CD8-positive, alpha-beta T cell (primary cell): ENCODE measurements at regions of chr12 and their contacts with region 1.

Region 1: DNA sequence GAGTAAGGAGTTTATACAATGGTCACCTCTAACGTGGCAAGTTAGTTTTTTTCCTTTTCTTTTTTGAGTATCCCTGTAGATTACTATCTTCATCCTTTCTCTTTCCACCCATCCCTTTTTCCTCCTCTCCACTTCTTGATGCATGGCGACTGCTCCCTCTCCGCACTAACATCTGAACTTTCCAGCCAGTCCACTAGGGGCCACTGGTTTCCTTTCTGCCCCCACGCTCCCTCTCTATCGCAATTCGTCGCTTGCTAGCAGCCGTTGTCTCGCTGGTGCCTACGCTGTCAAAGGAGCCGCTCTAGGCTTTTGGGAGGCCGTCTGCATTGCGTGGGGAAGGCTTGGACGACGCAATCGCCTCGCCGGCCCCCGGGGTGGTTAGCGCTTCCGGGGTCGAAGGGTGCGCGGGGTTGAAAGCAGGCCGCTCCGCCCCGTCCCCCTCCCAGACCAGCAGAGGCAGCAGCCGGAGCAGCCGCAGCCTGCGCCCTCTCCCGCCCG is at the start of gene PCBP2:
- DNase-seq: peak; percentile 94 to 99 (median 98)
- ATAC-seq: peak; percentile 93
- H3K4me3 ChIP-seq: peak within 1 kb of the TSS; percentile 81 to 88
- H3K4me3 Mint-ChIP-seq: peak within 1 kb of the TSS; percentile 99
- H3K27ac ChIP-seq: peak within 1 kb of the TSS; percentile 80 to 95
- H3K27ac Mint-ChIP-seq: peak within 1 kb of the TSS; percentile 99
- H3K4me1 ChIP-seq: peaks cover 27% of the 10 kb centered on the region
- H3K4me1 Mint-ChIP-seq: peaks cover 43% of the 10 kb centered on the region
- H3K27me3 ChIP-seq: no peaks in the 10 kb centered on the region
- H3K27me3 Mint-ChIP-seq: no peaks in the 10 kb centered on the region
- CTCF ChIP-seq: peak; percentile 94
- total RNA-seq, gene PCBP2: 1,250 to 1,255 TPM

Region 2: GRCh38 chr12:53352331-53353256 is 99.1 kb before region 1 on chr12:
- CTCF ChIA-PET with region 1: interaction called, 11 read pairs
- POLR2A ChIA-PET with region 1: no interaction called
- intact Hi-C with region 1: no loop called
- DNase-seq: peak; percentile 67 to 92 (median 82)
- ATAC-seq: peak; percentile 100
- H3K4me3 ChIP-seq: no peak overlapping the region
- H3K4me3 Mint-ChIP-seq: no peak overlapping the region
- H3K27ac ChIP-seq: no peak overlapping the region
- H3K27ac Mint-ChIP-seq: peak overlapping the region; percentile 8
- H3K4me1 ChIP-seq: no peaks in the 10 kb centered on the region
- H3K4me1 Mint-ChIP-seq: peaks cover 6% of the 10 kb centered on the region
- H3K27me3 ChIP-seq: no peaks in the 10 kb centered on the region
- H3K27me3 Mint-ChIP-seq: no peaks in the 10 kb centered on the region
- CTCF ChIP-seq: peak; percentile 75

Region 3: GRCh38 chr12:53467880-53468279 is 16.2 kb after region 1 on chr12:
- CTCF ChIA-PET with region 1: no interaction called
- POLR2A ChIA-PET with region 1: interaction called, 3 read pairs
- intact Hi-C with region 1: loop called in 1 of 2 experiments (anchors 2 kb)
- DNase-seq: no peak
- ATAC-seq: no peak
- H3K4me3 ChIP-seq: no peak overlapping the region
- H3K4me3 Mint-ChIP-seq: no peak overlapping the region
- H3K27ac ChIP-seq: no peak overlapping the region
- H3K27ac Mint-ChIP-seq: no peak overlapping the region
- H3K4me1 ChIP-seq: no peaks in the 10 kb centered on the region
- H3K4me1 Mint-ChIP-seq: peaks cover 39% of the 10 kb centered on the region
- H3K27me3 ChIP-seq: no peaks in the 10 kb centered on the region
- H3K27me3 Mint-ChIP-seq: no peaks in the 10 kb centered on the region
- CTCF ChIP-seq: no peak

Region 4: DNA sequence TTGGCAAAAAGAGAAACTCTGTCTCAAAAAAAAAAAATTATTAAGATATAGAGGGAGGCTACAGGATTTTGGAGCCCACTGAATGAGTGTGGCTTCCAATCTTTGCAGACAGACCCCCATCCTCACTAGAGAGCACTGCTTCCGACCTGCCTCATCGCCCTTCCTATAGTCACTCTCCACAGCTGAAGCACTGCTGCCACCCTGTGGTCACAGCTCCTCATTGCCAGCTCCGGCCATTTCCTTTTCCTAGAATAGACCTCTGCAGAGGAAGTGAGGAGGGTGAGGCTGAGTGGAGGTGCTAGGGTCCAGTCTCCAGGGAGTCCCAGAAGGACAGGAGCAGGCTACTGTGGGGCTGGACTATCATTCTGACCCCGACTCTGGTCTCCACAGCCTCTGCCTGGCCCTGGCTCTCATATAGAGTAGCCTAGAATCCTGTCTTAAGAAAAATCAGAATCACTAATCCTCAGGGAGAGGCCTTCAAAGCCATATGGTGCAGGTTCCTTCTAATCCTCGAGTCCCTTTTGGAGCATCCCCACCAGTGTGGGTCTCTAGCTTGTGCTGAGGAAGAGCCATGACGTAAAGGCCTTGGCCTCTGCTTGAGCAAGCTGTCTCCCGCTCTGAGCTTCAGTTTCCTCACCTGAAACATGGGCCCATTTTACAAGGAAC is 57.0 kb after region 1 on chr12:
- CTCF ChIA-PET with region 1: interaction called, 7 read pairs
- POLR2A ChIA-PET with region 1: interaction called, 9 read pairs
- intact Hi-C with region 1: loop called in 1 of 2 experiments (anchors 2 kb)
- DNase-seq: peak; percentile 64 to 90 (median 83)
- ATAC-seq: peak; percentile 100
- H3K4me3 ChIP-seq: no peak overlapping the region
- H3K4me3 Mint-ChIP-seq: no peak overlapping the region
- H3K27ac ChIP-seq: peak overlapping the region in 1 of 2 experiments; percentile 17
- H3K27ac Mint-ChIP-seq: no peak overlapping the region
- H3K4me1 ChIP-seq: peaks cover 9% of the 10 kb centered on the region
- H3K4me1 Mint-ChIP-seq: peaks cover 5% of the 10 kb centered on the region
- H3K27me3 ChIP-seq: no peaks in the 10 kb centered on the region
- H3K27me3 Mint-ChIP-seq: no peaks in the 10 kb centered on the region
- CTCF ChIP-seq: peak; percentile 84

Region 5: DNA sequence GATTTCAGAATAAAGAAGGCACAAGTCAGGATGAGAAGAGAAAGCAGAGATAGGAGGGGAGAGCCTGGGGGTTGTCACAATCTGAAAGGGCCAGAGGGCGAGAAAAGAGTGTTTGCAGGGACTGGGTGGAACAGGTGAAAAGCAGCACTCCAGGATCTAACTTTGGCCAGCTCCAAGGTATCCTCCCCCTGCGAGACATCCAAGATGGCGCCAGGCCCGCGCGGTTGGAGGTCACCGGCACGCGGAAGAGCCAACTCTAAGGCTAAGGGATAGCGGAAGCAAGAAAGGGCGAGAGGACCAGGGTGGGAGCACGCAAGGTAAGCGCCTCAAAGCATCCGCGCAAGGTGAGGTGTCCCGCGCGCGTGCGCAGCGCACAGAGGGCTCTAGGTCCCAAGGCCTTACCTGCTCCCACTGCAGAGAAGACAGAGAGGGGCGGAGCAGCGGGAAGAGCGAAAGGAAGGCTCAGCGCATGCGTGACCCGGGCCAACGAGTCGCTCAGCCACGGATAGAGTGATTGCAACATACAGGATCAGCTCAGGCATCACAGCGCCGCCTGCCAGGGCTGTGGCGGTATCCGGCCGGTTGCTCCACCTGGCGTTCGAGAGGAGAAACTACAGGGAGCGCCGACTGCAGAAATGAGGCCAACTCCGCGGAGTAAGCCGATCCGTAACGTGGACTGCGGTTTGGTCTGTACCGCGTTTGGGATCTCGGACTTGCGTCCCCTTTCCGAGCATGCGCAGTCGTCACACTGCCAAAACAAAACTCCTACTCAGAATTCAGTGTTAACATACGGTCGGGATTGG is 224.1 kb after region 1 on chr12 and contains the start of gene ATP5MC2:
- CTCF ChIA-PET with region 1: no interaction called
- POLR2A ChIA-PET with region 1: no interaction called
- intact Hi-C with region 1: loop called in 1 of 2 experiments (anchors 1 kb)
- DNase-seq: peak; percentile 96 to 99 (median 97)
- ATAC-seq: peak; percentile 90
- H3K4me3 ChIP-seq: peak within 1 kb of the TSS; percentile 67 to 92
- H3K4me3 Mint-ChIP-seq: peak within 1 kb of the TSS; percentile 92
- H3K27ac ChIP-seq: peak within 1 kb of the TSS; percentile 60 to 84
- H3K27ac Mint-ChIP-seq: peak within 1 kb of the TSS; percentile 95
- H3K4me1 ChIP-seq: peaks cover 14% of the 10 kb centered on the region
- H3K4me1 Mint-ChIP-seq: peaks cover 36% of the 10 kb centered on the region
- H3K27me3 ChIP-seq: peaks cover 0 to 16% of the 10 kb centered on the region in 2 experiments
- H3K27me3 Mint-ChIP-seq: peaks cover 16% of the 10 kb centered on the region
- CTCF ChIP-seq: peak; percentile 99
- total RNA-seq, gene ATP5MC2: 220 to 229 TPM